HAP-1 (cell line): ENCODE measurements at regions of chr4 and their contacts with region 1.

Region 1: DNA sequence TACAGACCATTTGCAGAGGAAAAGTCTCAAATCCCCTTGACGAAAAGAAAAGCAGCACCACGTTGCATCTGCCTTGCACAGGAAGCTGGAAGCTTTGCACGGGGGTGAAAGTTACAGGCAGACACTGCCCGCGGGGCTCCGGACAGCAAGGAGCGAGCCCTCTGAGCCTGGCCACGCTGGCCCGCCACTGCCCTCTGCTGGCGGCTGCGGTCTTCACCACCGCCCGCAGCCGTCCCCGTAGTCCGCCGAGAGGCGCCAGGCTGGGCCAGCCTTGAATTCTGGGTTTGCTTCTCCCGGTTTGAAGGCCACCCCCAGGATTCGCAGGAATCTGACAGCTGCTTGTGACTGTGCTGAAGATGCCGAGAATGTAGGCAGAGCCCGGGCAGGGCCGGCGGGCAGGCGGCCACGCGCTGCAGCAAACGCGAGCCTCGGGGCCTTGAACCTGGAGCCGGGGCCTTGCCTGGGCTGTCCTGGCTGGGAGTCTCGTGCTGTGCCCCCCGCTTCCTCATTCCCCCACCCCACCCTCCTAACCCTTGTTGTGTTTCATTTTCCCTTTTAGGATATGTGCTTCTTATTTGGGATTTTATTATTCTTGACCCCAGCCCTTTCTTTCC is 49.2 kb downstream of the ENPP6 start:
- DNase-seq: peak; percentile 64 to 87
- H3K4me3 ChIP-seq: no peak overlapping the region
- H3K4me1 ChIP-seq: peaks cover 17% of the 10 kb centered on the region
- H3K27me3 ChIP-seq: no peaks in the 10 kb centered on the region

Region 2: DNA sequence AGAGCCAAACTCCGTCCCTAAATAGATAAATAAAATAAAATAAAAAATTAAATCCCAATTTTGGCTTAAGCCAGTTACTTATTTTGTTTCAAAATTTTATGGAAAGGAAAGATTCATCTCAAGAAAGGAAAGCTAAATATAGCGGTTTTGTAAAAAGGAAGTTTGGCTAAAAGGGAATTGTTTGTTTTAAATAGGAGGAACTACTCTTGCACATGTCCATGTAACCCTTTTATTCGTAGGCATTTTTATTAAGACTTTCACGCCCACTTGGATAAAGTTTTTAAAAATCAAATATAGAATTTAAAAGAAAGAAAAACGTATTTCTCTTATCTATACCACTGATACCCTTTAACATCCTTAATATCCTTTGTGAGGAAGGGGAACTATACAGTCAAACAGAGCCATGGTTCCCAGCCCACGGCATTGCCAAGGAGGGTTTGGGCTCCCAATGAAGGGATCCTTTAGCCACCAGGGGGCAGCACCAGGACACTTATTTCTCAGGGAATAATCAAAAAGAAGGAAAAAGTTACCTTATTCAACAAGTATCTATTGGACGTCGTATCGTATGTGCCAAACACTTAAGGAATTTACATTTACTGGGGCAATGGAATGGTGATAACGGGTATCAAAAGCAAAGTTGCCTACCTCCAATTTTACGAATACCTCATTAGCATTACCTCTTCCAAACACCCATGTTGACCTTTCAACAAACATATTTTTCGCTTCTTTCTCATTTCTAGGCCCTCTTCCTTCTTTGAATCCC is 696.4 kb before region 1 on chr4:
- in situ Hi-C with region 1: loop called (anchors 10 kb)
- DNase-seq: peak; percentile 78 to 95
- H3K4me3 ChIP-seq: no peak overlapping the region
- H3K4me1 ChIP-seq: no peaks in the 10 kb centered on the region
- H3K27me3 ChIP-seq: no peaks in the 10 kb centered on the region

Region 3: DNA sequence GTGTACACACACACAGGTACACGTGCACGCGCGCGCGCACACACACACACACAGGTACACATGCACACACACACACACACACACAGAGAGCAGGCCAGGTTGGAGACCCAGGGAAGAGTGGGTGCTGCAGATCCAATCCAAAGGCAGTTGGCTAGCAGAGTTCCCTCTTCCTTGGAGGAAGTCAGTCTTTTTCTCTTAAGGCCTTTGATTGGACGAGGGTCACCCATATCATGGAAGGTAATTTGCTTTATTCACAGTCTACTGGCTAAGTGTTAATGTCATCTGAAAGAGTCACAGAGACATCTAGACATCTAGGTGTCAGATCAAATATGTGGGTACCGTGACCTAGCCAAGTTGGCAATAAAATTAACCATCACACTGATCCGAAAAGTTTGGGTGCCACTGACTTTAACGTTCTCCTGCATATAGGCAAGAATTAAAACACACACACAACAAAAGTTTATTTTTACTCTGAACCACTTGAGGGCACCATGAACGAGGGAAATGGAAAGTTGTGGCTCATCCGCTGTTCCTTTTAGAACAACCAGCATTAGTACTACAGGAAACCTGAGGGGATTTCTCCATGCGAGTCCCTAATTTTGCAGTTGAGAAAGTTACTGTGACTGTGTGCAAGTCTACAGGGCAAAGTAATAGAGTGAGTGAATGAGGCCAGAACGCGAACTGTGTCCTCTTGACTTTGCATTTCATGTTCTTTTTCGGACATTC is 329.4 kb before region 1 on chr4:
- in situ Hi-C with region 1: loop called (anchors 5 kb)
- DNase-seq: no peak
- H3K4me3 ChIP-seq: no peak overlapping the region
- H3K4me1 ChIP-seq: no peaks in the 10 kb centered on the region
- H3K27me3 ChIP-seq: no peaks in the 10 kb centered on the region

Region 4: DNA sequence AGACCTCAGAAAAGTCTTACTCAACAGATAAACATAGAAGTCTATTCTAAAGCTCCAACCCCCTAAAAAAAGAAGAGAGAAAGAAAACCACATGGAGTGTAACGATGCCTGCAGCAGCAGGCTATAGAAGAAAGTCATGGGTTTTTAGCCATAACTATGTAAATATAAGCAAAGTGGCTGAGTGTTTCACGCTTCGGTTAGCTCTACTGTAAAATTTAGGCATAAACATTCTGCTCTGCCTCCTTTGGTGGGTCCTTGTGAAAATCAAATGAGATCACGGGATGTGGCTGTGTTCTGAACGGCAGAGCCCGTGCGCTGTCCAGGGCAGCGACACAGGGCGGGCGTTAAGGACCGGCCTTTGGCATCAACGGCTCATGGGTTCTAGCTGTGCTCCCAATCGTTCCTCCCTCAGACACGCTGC is 227.5 kb after region 1 on chr4:
- in situ Hi-C with region 1: no loop called
- DNase-seq: no peak
- H3K4me3 ChIP-seq: no peak overlapping the region
- H3K4me1 ChIP-seq: no peaks in the 10 kb centered on the region
- H3K27me3 ChIP-seq: no peaks in the 10 kb centered on the region